SK-N-SH (cell line): ENCODE measurements at regions of chr19 and their contacts with region 1.

Region 1: GRCh38 chr19:55146078-55146704 is 2.8 kb downstream of the TNNT1 start:
- DNase-seq: peak; percentile 76
- H3K4me3 ChIP-seq: peak overlapping the region in 1 of 2 experiments; percentile 24; a peak in 2 of 4 replicates
- H3K27ac ChIP-seq: no peak overlapping the region
- H3K4me1 ChIP-seq: no peaks in the 10 kb centered on the region; a peak in 1 of 4 replicates
- H3K27me3 ChIP-seq: peaks cover 28% of the 10 kb centered on the region
- CTCF ChIP-seq: peak; percentile 54
- EP300 ChIP-seq: no peak
- RAD21 ChIP-seq: no peak

Region 2: DNA sequence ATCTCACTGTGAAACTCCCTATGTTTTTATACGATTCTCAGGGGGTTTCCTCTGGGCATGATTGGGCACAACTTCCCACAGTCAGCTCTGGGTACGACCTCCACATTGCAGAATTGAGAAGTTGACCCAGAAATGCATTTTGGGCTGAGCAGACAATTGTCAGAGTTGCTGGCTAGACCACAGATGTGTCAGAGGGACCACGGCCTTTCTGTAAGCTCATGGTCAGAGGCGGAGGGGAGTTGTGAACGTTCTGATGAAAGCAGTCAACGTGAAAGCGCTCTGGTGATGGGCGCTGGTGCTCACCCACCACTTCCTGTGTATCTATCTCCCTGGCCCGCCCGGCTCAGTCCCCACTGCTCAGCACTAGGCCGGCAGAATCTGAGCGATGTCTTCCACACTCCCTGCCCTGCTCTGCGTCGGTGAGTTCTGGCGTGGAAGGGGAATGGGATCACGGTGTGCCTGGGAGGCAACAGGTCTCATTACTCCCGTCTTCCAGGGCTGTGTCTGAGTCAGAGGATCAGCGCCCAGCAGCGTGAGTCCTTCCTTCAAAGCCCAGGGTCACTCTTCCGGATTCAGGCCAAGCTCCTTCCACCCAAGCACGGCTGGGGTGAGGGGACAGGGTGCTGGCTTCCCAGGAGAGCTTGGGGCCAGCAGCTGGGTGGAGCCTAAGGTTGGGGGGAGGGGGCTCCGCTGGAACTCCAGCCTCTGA is 240.2 kb before region 1 on chr19 and contains the start of gene NCR1:
- CTCF ChIA-PET with region 1: no interaction called
- POLR2A ChIA-PET with region 1: no interaction called
- DNase-seq: no peak
- H3K4me3 ChIP-seq: no peak within 1 kb of the TSS
- H3K27ac ChIP-seq: no peak within 1 kb of the TSS
- H3K4me1 ChIP-seq: no peaks in the 10 kb centered on the region
- H3K27me3 ChIP-seq: peaks cover 23% of the 10 kb centered on the region; the same call in 1 of the 2 replicates
- CTCF ChIP-seq: no peak
- EP300 ChIP-seq: no peak
- RAD21 ChIP-seq: no peak
- polyA plus RNA-seq, gene NCR1: not detected in 2 replicates

Region 3: DNA sequence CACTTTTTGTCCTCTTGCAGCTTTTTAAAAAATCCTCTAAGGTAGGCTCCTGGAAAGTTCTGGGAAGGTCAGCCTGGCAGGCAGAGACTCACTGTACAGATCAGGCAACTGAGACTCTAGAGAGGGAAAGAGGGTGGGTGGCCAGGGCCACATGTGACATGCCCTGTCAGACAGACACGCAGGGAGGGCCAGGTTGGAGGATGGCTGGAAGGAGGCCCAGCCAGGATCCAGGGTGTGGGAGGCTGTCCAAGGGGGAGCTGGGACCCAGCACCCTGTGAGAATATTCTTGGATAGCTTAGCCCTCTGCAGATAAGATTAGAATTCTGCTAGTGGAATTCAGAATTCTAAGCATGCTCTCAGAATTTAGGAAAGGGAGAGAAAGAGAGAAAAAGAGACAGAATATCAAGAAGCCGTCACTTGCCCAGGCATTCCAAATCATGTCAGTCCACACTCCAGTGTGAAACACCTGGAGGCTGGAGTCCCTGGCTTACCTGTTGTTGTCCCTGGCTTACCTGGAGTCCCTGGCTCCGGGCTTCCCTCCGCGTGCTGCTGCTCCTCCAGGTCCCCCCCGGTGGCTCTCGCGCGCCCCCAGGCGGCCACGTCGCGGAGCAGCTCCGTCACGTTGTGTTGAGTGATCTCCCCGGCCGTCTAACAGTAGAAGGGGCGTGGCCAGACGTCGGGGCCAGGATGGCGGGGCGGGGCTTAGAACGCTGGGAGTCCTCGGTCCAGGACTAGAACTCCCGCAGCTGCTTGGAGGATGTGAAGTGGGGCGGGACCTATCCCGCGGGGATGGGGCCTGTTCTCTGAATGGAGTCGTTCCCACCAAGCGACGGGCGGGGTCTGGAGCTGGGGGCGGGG is 14.2 kb after region 1 on chr19:
- CTCF ChIA-PET with region 1: interaction called, 116 read pairs
- POLR2A ChIA-PET with region 1: no interaction called
- DNase-seq: peak; percentile 98
- H3K4me3 ChIP-seq: peak overlapping the region in 1 of 2 experiments; percentile 52; a peak in 1 of 4 replicates
- H3K27ac ChIP-seq: no peak overlapping the region
- H3K4me1 ChIP-seq: peaks cover 0 to 10% of the 10 kb centered on the region in 2 experiments; a peak in 1 of 4 replicates
- H3K27me3 ChIP-seq: peaks cover 21% of the 10 kb centered on the region
- CTCF ChIP-seq: peak; percentile 90
- EP300 ChIP-seq: no peak
- RAD21 ChIP-seq: peak; percentile 71

Region 4: DNA sequence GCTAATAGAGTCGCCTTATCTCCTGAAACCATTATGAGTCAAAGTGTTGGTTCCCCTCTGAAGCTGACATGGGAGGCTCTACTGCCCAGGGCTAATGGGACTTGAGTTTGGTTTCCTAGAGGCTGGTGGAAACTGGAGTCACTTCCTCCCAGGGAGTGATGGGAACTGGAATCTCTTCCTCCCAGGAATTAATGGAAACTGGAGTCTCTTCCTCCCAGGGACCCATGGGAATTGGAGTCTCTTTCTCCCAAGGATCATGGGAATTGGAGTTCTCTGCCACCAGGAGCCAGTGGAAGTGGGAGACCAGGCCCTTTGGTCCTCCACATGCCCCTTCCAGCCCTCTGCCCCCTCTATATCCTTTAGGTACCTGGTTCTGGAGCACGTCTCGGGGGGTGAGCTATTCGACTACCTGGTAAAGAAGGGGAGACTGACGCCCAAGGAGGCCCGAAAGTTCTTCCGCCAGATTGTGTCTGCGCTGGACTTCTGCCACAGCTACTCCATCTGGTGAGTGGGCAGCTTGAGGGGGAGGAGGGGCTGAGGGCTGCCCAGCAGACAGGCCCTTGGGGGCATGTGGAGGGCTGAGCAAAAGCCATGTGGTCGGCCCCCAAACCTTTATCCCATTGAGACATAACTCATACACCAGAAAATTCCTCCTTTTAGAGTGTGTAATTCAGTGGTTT is 143.1 kb after region 1 on chr19:
- CTCF ChIA-PET with region 1: interaction called, 14 read pairs
- POLR2A ChIA-PET with region 1: no interaction called
- DNase-seq: peak; percentile 33
- H3K4me3 ChIP-seq: no peak overlapping the region
- H3K27ac ChIP-seq: no peak overlapping the region
- H3K4me1 ChIP-seq: peaks cover 0 to 7% of the 10 kb centered on the region in 2 experiments; a peak in 1 of 4 replicates
- H3K27me3 ChIP-seq: no peaks in the 10 kb centered on the region
- CTCF ChIP-seq: no peak
- EP300 ChIP-seq: no peak
- RAD21 ChIP-seq: no peak

Region 5: GRCh38 chr19:55385740-55386529 is 239.7 kb after region 1 on chr19 and contains the start of gene RPL28:
- CTCF ChIA-PET with region 1: interaction called, 22 read pairs
- POLR2A ChIA-PET with region 1: no interaction called
- DNase-seq: peak; percentile 94
- H3K4me3 ChIP-seq: peak within 1 kb of the TSS; percentile 86 to 97
- H3K27ac ChIP-seq: peak within 1 kb of the TSS; percentile 98
- H3K4me1 ChIP-seq: peaks cover 25 to 51% of the 10 kb centered on the region in 2 experiments; a peak in 3 of 4 replicates
- H3K27me3 ChIP-seq: no peaks in the 10 kb centered on the region
- CTCF ChIP-seq: no peak
- EP300 ChIP-seq: no peak
- RAD21 ChIP-seq: no peak
- polyA plus RNA-seq, gene RPL28: 2,297 and 2,368 TPM in 2 replicates

Region 6: GRCh38 chr19:55442372-55443059 is 296.3 kb after region 1 on chr19:
- CTCF ChIA-PET with region 1: interaction called, 13 read pairs
- POLR2A ChIA-PET with region 1: no interaction called
- DNase-seq: peak; percentile 59
- H3K4me3 ChIP-seq: no peak overlapping the region
- H3K27ac ChIP-seq: no peak overlapping the region
- H3K4me1 ChIP-seq: peaks cover 0 to 6% of the 10 kb centered on the region in 2 experiments; a peak in 1 of 4 replicates
- H3K27me3 ChIP-seq: peaks cover 60% of the 10 kb centered on the region
- CTCF ChIP-seq: no peak
- EP300 ChIP-seq: no peak
- RAD21 ChIP-seq: no peak

Region 7: GRCh38 chr19:55503502-55504251 is 357.5 kb after region 1 on chr19:
- CTCF ChIA-PET with region 1: interaction called, 40 read pairs
- POLR2A ChIA-PET with region 1: no interaction called
- DNase-seq: peak; percentile 99
- H3K4me3 ChIP-seq: peak overlapping the region; percentile 49 to 62
- H3K27ac ChIP-seq: peak overlapping the region in 1 of 2 experiments; percentile 71; a peak in 1 of 4 replicates
- H3K4me1 ChIP-seq: peaks cover 0 to 6% of the 10 kb centered on the region in 2 experiments; a peak in 1 of 4 replicates
- H3K27me3 ChIP-seq: no peaks in the 10 kb centered on the region
- CTCF ChIP-seq: peak; percentile 96
- EP300 ChIP-seq: no peak
- RAD21 ChIP-seq: peak; percentile 93